Adrenal gland (tissue), 19 donors: ENCODE measurements at regions of chr14 and their contacts with region 1.

Region 1: DNA sequence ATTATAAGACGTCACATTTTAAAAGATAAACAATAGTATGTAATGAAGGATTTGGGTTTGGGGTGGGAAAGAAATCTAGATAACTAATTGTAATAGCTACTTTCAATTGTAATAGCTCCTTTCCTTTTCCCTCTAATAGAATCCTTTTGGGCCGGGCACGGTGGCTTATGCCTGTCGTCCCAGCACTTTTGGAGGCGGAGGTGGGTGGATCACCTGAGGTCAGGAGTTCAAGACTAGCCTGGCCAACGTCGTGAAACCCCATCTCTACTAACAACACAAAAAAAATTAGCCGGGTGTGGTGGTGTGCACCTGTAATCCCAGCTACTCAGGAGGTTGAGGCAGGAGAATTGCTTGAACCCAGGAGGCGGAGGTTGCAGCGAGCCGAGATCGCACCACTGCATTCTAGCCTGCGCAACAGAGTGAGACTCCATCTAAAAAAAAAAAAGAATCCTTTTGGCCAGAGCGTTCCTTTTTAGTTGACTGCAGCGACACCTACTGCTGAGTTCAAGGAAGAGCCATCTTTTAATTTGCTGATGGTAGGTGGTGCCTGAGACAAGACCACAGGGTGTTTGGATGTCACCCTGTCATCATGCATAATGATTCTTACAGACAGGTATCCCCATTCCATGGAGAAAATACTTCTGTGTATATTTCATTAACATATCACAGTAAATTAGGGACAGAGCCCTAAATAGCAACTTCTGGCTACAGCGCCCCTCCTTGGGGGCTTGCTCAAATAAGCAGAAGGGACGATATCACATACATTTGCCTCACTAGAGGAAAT is 79.5 kb downstream of the ARMH4 start:
- DNase-seq: peak; percentile 34 to 74 (median 53)
- H3K4me3 ChIP-seq: peak overlapping the region in 2 of 4 donors; percentile 3 to 8
- H3K27ac ChIP-seq: no peak overlapping the region
- H3K4me1 ChIP-seq: no peaks in the 10 kb centered on the region
- H3K27me3 ChIP-seq: no peaks in the 10 kb centered on the region
- CTCF ChIP-seq: peak; percentile 52 to 79 (median 74)
- POLR2A ChIP-seq: no peak

Region 2: DNA sequence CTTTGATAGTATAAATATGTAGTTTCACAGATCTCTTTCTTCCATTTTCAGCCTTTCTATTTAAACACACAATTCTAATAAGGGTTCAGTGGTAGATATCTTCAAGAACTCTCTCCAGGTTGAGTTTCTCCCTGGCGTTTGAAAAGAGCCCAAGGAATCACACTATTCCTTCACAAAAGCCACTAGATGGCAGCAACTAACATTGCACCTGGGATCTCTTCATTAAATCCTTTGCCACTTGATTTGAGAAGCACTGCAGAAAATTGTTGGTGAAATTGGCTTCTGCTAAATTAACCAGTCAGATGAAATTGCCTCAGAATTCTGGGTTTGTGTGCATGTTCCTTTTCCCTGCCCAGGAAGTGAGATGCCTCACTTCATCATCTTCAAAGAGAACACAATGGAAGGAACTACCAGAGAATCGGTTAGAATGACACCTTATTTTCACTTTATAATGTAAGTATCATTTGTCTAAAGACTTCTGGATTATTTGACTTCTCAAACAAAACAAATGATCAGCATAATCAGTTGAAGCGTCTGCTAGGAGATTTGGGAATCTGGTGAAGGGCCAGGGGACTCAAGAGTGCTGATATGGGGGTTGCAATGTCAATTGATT is 585.6 kb before region 1 on chr14:
- intact Hi-C with region 1: loop called in 1 of 2 experiments (anchors 5 kb)
- DNase-seq: peak in 2 of 7 donors; percentile 17 to 28
- H3K4me3 ChIP-seq: no peak overlapping the region
- H3K27ac ChIP-seq: no peak overlapping the region
- H3K4me1 ChIP-seq: no peaks in the 10 kb centered on the region
- H3K27me3 ChIP-seq: no peaks in the 10 kb centered on the region
- CTCF ChIP-seq: peak; percentile 45 to 63 (median 55)
- POLR2A ChIP-seq: no peak

Region 3: GRCh38 chr14:57686304-57686703 is 386.2 kb before region 1 on chr14:
- intact Hi-C with region 1: loop called in 1 of 2 experiments (anchors 10 kb)
- DNase-seq: no peak
- H3K4me3 ChIP-seq: no peak overlapping the region
- H3K27ac ChIP-seq: no peak overlapping the region
- H3K4me1 ChIP-seq: no peaks in the 10 kb centered on the region
- H3K27me3 ChIP-seq: no peaks in the 10 kb centered on the region
- CTCF ChIP-seq: no peak
- POLR2A ChIP-seq: no peak

Region 4: GRCh38 chr14:57889245-57889644 is 183.2 kb before region 1 on chr14:
- intact Hi-C with region 1: loop called in 1 of 2 experiments (anchors 10 kb)
- DNase-seq: peak; percentile 67 to 89 (median 85)
- H3K4me3 ChIP-seq: no peak overlapping the region
- H3K27ac ChIP-seq: no peak overlapping the region
- H3K4me1 ChIP-seq: no peaks in the 10 kb centered on the region
- H3K27me3 ChIP-seq: no peaks in the 10 kb centered on the region
- CTCF ChIP-seq: no peak
- POLR2A ChIP-seq: no peak